ENCODE measurements at regions of chr7 and their contacts with region 1.

Region 1: GRCh38 chr7:66837007-66837406 is 84.0 kb upstream of the TMEM248 start:
- DNase-seq: no peak
- H3K4me3 Mint-ChIP-seq: no peak overlapping the region
- H3K27ac Mint-ChIP-seq: no peak overlapping the region
- H3K4me1 Mint-ChIP-seq: no peaks in the 10 kb centered on the region
- H3K27me3 Mint-ChIP-seq: no peaks in the 10 kb centered on the region

Region 2: GRCh38 chr7:66894463-66895080 is 57.6 kb after region 1 on chr7:
- intact Hi-C with region 1: loop called (anchors 1 kb)
- DNase-seq: no peak
- H3K4me3 Mint-ChIP-seq: no peak overlapping the region
- H3K27ac Mint-ChIP-seq: no peak overlapping the region
- H3K4me1 Mint-ChIP-seq: no peaks in the 10 kb centered on the region
- H3K27me3 Mint-ChIP-seq: peaks cover 2% of the 10 kb centered on the region

Measured in activated T-helper 1 cell treated with anti-CD3 and anti-CD28 coated beads, Interleukin-12 subunit alpha, Interleukin-12 subunit beta, Interleukin-2, Interleukin-4 antibody, amounts not matched to agents 30 ng/mL and 10 ng/mL and 1 ng/mL, durations not matched to agents 14 hours and 24 hours and 36 hours (primary cell).